ENCODE measurements at regions of chr11 and their contacts with region 1.

Region 1: DNA sequence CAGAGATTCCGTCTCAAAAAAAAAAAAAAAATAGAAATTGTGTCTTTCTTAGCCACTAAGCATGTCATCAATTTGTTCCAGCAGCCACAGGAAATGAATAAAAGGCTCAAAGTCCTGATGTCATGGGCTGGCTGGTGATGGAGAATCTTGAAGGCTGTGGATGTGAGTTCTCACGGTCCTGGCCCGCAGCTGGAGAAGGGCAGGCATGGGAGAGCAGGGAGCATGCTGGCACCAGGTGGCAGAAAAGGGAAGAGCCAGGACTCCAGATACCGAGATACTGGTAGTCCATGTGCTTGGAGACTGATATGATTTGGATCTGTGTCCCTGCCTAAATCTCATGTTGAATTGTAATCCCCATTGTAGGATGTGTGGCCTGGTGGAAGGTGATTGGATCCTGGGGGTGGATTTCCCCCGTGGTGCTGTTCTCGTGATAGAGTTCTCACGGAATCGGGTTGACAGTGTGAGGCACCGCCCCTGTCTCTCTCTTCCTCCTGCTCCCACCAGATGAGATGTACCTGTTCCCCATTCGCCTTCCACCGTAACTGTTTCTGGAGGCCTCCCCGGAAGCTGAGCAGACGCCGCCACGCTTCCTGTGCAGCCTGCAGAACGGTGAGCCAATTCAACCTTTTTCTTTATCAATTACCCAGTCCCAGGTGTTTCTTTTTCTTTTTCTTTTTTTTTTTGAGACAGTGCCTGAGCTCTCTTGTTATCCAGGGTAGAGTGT is 18.1 kb downstream of the MRGPRD start:
- DNase-seq: no peak
- ATAC-seq: no peak
- H3K4me3 ChIP-seq: no peak overlapping the region
- H3K27ac ChIP-seq: no peak overlapping the region
- H3K4me1 ChIP-seq: no peaks in the 10 kb centered on the region
- H3K27me3 ChIP-seq: no peaks in the 10 kb centered on the region
- CTCF ChIP-seq: no peak
- POLR2A ChIP-seq: no peak

Region 2: DNA sequence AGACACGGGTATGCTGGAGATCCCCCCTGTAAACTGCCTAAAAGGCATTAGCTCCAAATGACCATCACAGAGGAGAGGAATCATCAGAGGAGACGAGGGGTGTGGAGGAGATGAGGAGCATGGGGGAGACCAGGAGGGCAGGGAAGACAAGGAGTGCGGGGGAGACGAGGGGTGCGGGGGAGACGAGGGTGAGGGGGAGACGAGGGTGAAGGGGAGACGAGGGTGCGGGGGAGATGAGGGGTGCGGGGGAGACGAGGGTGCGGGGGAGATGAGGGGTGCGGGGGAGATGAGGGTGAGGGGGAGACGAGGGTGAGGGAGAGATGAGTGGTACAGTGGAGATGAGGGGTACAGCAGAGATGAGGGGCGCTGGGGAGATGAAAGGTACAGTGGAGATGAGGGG is 295.8 kb before region 1 on chr11:
- intact Hi-C with region 1: loop called in 1 of 10 experiments (anchors 10 kb)
- DNase-seq: peak in 2 of 5 donors; percentile 14 to 26
- ATAC-seq: no peak
- H3K4me3 ChIP-seq: no peak overlapping the region
- H3K27ac ChIP-seq: no peak overlapping the region
- H3K4me1 ChIP-seq: no peaks in the 10 kb centered on the region
- H3K27me3 ChIP-seq: peaks cover 0 to 31% (median 0%) of the 10 kb centered on the region in 9 donors
- CTCF ChIP-seq: no peak
- POLR2A ChIP-seq: no peak